ENCODE measurements at regions of chr5 and their contacts with region 1.

Region 1: DNA sequence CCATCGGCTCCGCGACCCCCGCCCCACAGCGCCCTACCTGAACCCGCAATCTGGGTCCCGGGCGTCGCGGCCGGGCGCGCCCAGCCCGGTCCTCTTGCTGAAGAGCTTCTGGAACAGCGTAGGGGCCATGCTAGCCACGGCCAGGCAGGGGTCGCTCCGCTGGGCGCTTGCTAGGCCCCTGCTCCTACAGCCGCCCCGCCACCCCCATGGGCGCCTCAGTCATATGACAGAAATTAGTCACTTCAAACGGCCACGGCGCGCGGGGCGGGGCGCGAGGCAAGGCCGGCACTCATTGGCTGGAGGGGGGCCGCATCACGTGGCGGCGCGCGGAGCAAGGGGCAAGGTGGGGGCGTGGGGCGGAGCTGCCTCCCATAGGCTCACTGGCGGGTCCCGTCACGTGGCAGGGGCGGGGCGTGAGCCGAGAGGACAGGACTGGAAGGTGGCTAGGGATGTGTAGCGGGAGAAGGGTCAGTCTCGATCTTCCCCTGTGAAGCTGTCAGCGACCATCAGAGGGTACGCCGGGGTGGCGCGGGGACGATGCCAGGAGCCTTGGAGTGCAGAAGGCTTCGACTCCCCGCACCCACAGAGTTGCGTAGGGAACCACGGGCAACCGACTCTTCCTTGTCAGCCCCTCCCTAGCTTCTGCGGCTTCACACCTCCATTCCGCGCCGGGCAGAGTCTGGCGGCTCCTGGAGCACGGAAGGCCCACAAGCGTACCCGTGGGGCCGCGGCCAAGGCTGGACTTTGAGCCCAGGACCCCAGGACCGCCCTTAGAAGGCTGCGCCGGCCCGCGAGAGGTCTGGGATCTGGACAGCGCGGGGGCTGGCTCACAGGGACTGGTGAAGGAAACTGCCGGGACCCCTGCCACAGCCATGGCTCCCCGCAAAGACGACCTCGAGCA is at the start of gene FNIP1:
- DNase-seq: peak; percentile 94 to 99 (median 98)
- ATAC-seq: peak; percentile 94
- H3K4me3 ChIP-seq: peak within 1 kb of the TSS; percentile 93
- H3K4me3 Mint-ChIP-seq: peak within 1 kb of the TSS; percentile 98
- H3K27ac ChIP-seq: peak within 1 kb of the TSS; percentile 88 to 91
- H3K27ac Mint-ChIP-seq: peak within 1 kb of the TSS; percentile 96
- H3K4me1 ChIP-seq: peaks cover 14% of the 10 kb centered on the region
- H3K4me1 Mint-ChIP-seq: peaks cover 44% of the 10 kb centered on the region
- H3K27me3 ChIP-seq: no peaks in the 10 kb centered on the region
- H3K27me3 Mint-ChIP-seq: no peaks in the 10 kb centered on the region
- CTCF ChIP-seq: no peak
- total RNA-seq, gene FNIP1: 34.5 to 34.7 TPM

Region 2: DNA sequence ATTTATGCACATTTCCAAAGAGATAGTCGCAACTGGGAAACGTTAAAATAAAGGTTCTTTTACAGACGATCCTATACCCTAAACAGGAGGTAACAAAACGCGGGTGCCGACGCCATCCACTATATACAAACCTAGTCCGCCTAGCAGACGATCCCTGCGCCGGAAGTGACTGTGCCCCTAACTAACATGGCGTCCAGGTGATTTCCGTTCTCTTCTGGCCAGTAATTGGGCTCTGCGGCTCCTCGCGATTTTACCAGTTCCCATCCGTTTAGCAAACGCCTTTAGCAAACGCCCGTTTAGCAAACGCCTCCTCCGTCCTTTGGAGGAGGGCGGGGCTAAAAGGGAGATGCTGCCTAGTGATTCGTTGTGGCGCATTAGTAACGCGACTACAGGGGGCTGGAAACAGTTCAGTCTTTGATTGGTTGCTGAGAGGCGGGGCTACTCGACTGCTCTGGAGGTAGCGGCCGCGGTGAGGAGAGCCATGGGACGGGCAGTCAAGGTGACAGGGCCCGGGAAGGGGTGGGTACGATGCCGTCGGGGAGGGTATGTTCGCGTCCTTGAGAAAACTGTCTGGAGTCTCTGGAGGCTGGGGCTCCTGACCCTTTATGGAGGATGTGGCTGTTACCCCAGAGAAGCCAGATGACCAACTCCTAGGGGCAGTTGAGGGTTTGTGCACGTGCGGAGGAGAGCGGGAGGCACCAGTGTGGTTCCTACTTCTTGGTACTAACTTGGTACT is 626.3 kb before region 1 on chr5 and contains the start of gene LYRM7:
- CTCF ChIA-PET with region 1: no interaction called
- POLR2A ChIA-PET with region 1: no interaction called
- intact Hi-C with region 1: loop called in 1 of 2 experiments (anchors 5 kb)
- DNase-seq: peak; percentile 88 to 99 (median 92)
- ATAC-seq: peak; percentile 94
- H3K4me3 ChIP-seq: peak within 1 kb of the TSS; percentile 73
- H3K4me3 Mint-ChIP-seq: peak within 1 kb of the TSS; percentile 98
- H3K27ac ChIP-seq: peak within 1 kb of the TSS; percentile 70 to 74
- H3K27ac Mint-ChIP-seq: peak within 1 kb of the TSS; percentile 94
- H3K4me1 ChIP-seq: peaks cover 16% of the 10 kb centered on the region
- H3K4me1 Mint-ChIP-seq: peaks cover 55% of the 10 kb centered on the region
- H3K27me3 ChIP-seq: no peaks in the 10 kb centered on the region
- H3K27me3 Mint-ChIP-seq: no peaks in the 10 kb centered on the region
- CTCF ChIP-seq: no peak
- total RNA-seq, gene LYRM7: 8.3 to 11.9 TPM

Region 3: GRCh38 chr5:131589510-131590348 is 207.3 kb before region 1 on chr5:
- CTCF ChIA-PET with region 1: interaction called, 6 read pairs
- POLR2A ChIA-PET with region 1: interaction called, 6 read pairs
- intact Hi-C with region 1: loop called in 1 of 2 experiments (anchors 5 kb)
- DNase-seq: peak in 8 of 14 experiments; percentile 11 to 76 (median 33)
- ATAC-seq: peak; percentile 71
- H3K4me3 ChIP-seq: no peak overlapping the region
- H3K4me3 Mint-ChIP-seq: no peak overlapping the region
- H3K27ac ChIP-seq: no peak overlapping the region
- H3K27ac Mint-ChIP-seq: peak overlapping the region; percentile 38
- H3K4me1 ChIP-seq: peaks cover 16% of the 10 kb centered on the region
- H3K4me1 Mint-ChIP-seq: peaks cover 64% of the 10 kb centered on the region
- H3K27me3 ChIP-seq: no peaks in the 10 kb centered on the region
- H3K27me3 Mint-ChIP-seq: no peaks in the 10 kb centered on the region
- CTCF ChIP-seq: peak; percentile 98

Region 4: GRCh38 chr5:131747180-131748105 is 49.6 kb before region 1 on chr5:
- CTCF ChIA-PET with region 1: no interaction called
- POLR2A ChIA-PET with region 1: interaction called, 15 read pairs
- intact Hi-C with region 1: loop called in 1 of 2 experiments (anchors 1 kb)
- DNase-seq: peak in 3 of 14 experiments; percentile 37 to 47 (median 38)
- ATAC-seq: peak; percentile 86
- H3K4me3 ChIP-seq: no peak overlapping the region
- H3K4me3 Mint-ChIP-seq: peak overlapping the region; percentile 43
- H3K27ac ChIP-seq: peak overlapping the region in 1 of 2 donors; percentile 42
- H3K27ac Mint-ChIP-seq: peak overlapping the region; percentile 86
- H3K4me1 ChIP-seq: peaks cover 3% of the 10 kb centered on the region
- H3K4me1 Mint-ChIP-seq: peaks cover 46% of the 10 kb centered on the region
- H3K27me3 ChIP-seq: no peaks in the 10 kb centered on the region
- H3K27me3 Mint-ChIP-seq: no peaks in the 10 kb centered on the region
- CTCF ChIP-seq: no peak

Measured in CD4-positive, alpha-beta T cell (primary cell).